ENCODE measurements at regions of chr2 and their contacts with region 1.

Region 1: GRCh38 chr2:39671604-39672003 is 5.9 kb downstream of the TMEM178A start:
- DNase-seq: no peak
- ATAC-seq: no peak
- H3K4me3 ChIP-seq: no peak overlapping the region
- H3K27ac ChIP-seq: no peak overlapping the region
- H3K4me1 ChIP-seq: peaks cover 3% of the 10 kb centered on the region; the same call in 1 of the 2 replicates
- H3K27me3 ChIP-seq: peaks cover 58% of the 10 kb centered on the region
- CTCF ChIP-seq: no peak
- POLR2A ChIP-seq: no peak
- RAD21 ChIP-seq: no peak

Region 2: DNA sequence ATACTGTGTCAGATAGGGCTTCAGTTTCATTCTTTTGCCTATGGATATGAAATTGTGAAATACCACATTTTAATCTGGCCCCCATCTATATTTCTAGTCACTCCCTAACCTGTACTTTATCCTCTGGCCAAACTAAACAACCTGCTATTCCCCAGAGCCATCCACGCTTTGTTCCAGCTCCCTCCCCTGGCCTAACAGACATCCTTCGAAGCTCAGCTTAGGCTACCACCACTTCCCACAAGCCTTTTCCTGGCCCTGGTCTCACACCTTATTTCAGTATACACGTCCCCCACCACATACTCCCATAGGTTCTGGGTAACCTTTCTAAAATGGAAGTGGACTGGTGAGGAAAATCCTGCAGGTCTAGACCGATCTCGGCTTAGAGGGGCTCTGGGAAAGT is 290.0 kb before region 1 on chr2:
- CTCF ChIA-PET with region 1: no interaction called
- POLR2A ChIA-PET with region 1: no interaction called
- dilution Hi-C with region 1: no loop called
- in situ Hi-C with region 1: no loop called
- intact Hi-C with region 1: no loop called
- DNase-seq: no peak
- ATAC-seq: no peak
- H3K4me3 ChIP-seq: no peak overlapping the region
- H3K27ac ChIP-seq: peak overlapping the region; percentile 64; the same call in 1 of the 2 replicates
- H3K4me1 ChIP-seq: peaks cover 10% of the 10 kb centered on the region
- H3K27me3 ChIP-seq: no peaks in the 10 kb centered on the region
- CTCF ChIP-seq: no peak
- POLR2A ChIP-seq: no peak
- RAD21 ChIP-seq: no peak

Region 3: GRCh38 chr2:39631718-39632117 is 39.9 kb before region 1 on chr2:
- CTCF ChIA-PET with region 1: no interaction called
- POLR2A ChIA-PET with region 1: no interaction called
- dilution Hi-C with region 1: no loop called
- in situ Hi-C with region 1: no loop called
- intact Hi-C with region 1: loop called (anchors 5 kb)
- DNase-seq: peak; percentile 98
- ATAC-seq: peak; percentile 91
- H3K4me3 ChIP-seq: no peak overlapping the region
- H3K27ac ChIP-seq: no peak overlapping the region
- H3K4me1 ChIP-seq: peaks cover 6% of the 10 kb centered on the region; the same call in 1 of the 2 replicates
- H3K27me3 ChIP-seq: no peaks in the 10 kb centered on the region
- CTCF ChIP-seq: no peak
- POLR2A ChIP-seq: no peak
- RAD21 ChIP-seq: no peak